ENCODE measurements at regions of chr10 and their contacts with region 1.

Region 1: GRCh38 chr10:122051251-122051996 is 62.5 kb downstream of the TACC2 start:
- DNase-seq: peak; percentile 60 to 83
- H3K4me3 ChIP-seq: no peak overlapping the region
- H3K27ac ChIP-seq: peak overlapping the region; percentile 45 to 49
- H3K4me1 ChIP-seq: peaks cover 0 to 20% (median 8%) of the 10 kb centered on the region in 4 donors
- H3K27me3 ChIP-seq: no peaks in the 10 kb centered on the region
- CTCF ChIP-seq: peak; percentile 58 to 72

Region 2: DNA sequence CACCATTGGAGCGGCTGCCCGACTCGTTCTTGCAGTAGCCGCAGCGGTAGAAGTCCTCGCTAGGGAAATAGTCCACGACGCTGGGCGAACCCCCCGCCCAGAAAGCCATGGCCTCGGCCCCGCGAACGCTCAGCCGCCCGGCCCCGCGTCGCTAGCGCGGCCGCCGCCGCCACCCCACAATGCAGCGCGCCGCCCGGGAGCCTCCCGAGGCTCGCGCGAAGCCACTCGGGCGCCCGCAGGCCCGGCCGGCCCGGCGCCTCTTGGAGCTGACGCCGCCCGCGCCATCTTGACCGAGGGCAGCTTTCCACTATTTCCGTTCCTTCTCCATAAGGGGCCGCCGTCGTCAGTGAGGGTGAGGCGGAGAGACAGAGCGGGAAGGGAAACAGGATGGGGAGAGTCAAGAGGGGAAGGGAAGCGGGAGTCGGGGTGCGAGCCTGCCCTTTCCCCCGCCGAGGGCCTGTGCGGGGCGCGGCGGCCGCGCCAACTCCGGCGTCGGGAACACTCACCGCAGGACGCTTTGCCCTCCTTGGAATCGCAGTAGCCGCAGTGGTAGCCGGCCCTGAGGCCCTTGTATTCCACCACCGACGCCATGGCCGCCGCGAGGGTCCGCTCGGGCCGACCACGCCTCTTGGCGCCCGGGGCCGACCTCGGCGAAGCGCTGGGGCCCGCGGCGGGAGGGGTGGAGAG is 123.4 kb before region 1 on chr10 and contains the start of gene ATE1:
- intact Hi-C with region 1: loop called (anchors 5 kb)
- DNase-seq: peak; percentile 93 to 95
- H3K4me3 ChIP-seq: peak within 1 kb of the TSS; percentile 73 to 98
- H3K27ac ChIP-seq: peak within 1 kb of the TSS; percentile 93 to 99
- H3K4me1 ChIP-seq: peaks cover 0 to 32% (median 11%) of the 10 kb centered on the region in 4 donors
- H3K27me3 ChIP-seq: no peaks in the 10 kb centered on the region
- CTCF ChIP-seq: peak; percentile 5 to 6

Region 3: GRCh38 chr10:122112625-122113160 is 61.3 kb after region 1 on chr10:
- intact Hi-C with region 1: loop called (anchors 2 kb)
- DNase-seq: peak; percentile 85 to 96
- H3K4me3 ChIP-seq: peak overlapping the region; percentile 61 to 83
- H3K27ac ChIP-seq: peak overlapping the region; percentile 99 to 100
- H3K4me1 ChIP-seq: peaks cover 0 to 39% (median 18%) of the 10 kb centered on the region in 4 donors
- H3K27me3 ChIP-seq: no peaks in the 10 kb centered on the region
- CTCF ChIP-seq: peak; percentile 64 to 68